MCF 10A (cell line): ENCODE measurements at regions of chr12 and their contacts with region 1.

Region 1: DNA sequence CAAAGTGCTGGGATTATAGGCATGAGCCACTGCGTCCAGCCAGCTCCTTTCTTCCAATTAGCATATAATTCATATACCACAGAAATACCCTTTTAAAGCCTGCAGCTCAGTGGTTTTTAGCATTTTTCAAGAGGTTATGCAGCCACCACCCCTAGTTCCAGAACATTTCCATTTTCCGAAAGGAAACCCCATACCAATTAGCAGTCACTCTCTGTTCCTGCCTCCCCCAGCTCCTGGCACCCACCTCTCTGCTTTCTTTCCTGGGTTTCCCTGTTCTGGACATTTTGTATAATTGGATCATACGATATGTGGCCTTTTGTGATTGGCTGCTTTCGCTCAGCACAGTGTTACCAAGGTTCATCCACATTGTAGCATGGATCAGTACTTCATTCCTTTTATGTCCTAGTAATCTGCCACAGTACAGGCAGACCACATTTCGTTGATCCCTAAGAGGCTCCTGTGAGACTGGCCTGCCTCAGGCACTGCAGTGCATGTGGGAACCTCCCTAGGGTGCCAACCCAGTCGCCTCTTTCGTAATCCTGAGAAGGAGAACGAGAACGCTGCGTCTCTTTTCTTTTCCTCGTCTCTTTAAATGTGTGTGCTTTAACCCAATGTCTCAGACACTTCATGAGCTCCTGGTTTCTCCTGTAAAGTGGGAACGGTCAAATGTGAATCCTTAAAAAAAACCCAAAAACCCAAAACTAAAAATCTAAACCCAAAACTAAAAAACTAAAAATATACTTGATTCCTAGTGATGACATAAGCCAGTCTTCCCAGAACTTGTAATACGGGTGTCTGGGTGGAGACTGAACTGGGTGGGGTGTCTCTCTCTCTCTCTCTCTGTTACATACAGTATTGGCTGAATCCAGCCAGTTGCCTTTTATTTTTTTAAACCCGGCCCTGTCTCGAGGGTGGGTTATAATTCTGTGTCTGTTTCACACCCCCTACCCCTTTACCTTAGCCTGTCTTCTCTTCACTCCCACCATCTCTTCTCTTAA is 14.7 kb downstream of the AACS start:
- DNase-seq: peak; percentile 97
- H3K4me3 Mint-ChIP-seq: peak overlapping the region; percentile 56
- H3K27ac Mint-ChIP-seq: peak overlapping the region; percentile 91
- H3K4me1 Mint-ChIP-seq: peaks cover 12% of the 10 kb centered on the region
- H3K27me3 Mint-ChIP-seq: no peaks in the 10 kb centered on the region
- CTCF ChIP-seq: no peak

Region 2: DNA sequence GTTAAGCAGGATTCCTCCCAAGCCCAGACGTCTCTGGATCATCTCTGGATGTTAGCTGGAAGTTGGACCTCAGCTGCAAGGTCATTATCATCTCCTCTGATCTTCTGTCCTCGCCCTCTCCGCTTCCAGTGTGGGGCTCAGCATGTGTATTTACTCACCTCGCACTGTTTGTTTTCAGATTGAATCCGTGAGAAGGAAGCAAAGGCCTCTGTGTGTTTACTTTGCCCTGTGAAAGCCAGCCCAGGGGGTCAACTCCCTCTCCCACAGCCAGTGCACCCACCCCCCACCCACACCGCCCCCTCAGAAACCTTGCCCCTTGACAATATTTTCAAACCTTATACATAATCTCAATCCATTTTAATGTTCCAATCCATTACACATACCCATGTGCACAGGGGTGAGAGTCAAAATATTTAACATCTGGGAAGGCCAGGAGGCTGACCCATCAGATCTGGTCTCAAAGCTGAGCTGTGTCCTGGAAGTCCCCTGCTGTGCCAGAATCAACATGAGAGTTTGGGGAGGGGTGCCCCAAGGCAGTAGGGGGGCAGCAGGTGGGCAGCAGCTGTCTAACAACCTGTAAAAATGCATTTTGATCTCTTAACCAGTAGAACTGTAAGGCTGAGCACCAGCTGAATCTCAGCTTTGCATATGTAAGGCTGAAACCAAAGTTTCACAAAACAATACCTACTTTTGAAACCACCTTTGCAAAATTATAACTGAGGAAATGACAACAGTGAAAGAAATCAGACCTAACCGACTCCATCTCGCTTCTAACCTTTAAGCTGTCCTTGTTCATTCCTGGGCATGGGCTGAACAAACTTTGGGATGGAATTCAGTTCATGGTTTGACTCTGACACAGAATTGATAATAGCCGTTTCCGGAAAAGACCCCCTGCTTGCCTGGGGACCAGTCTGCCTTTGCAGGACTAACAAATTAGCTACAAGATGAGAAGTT is 949.0 kb before region 1 on chr12:
- CTCF ChIA-PET with region 1: no interaction called
- POLR2A ChIA-PET with region 1: no interaction called
- intact Hi-C with region 1: no loop called
- DNase-seq: no peak
- H3K4me3 Mint-ChIP-seq: no peak overlapping the region
- H3K27ac Mint-ChIP-seq: no peak overlapping the region
- H3K4me1 Mint-ChIP-seq: peaks cover under 1% of the 10 kb centered on the region
- H3K27me3 Mint-ChIP-seq: no peaks in the 10 kb centered on the region
- CTCF ChIP-seq: no peak

Region 3: DNA sequence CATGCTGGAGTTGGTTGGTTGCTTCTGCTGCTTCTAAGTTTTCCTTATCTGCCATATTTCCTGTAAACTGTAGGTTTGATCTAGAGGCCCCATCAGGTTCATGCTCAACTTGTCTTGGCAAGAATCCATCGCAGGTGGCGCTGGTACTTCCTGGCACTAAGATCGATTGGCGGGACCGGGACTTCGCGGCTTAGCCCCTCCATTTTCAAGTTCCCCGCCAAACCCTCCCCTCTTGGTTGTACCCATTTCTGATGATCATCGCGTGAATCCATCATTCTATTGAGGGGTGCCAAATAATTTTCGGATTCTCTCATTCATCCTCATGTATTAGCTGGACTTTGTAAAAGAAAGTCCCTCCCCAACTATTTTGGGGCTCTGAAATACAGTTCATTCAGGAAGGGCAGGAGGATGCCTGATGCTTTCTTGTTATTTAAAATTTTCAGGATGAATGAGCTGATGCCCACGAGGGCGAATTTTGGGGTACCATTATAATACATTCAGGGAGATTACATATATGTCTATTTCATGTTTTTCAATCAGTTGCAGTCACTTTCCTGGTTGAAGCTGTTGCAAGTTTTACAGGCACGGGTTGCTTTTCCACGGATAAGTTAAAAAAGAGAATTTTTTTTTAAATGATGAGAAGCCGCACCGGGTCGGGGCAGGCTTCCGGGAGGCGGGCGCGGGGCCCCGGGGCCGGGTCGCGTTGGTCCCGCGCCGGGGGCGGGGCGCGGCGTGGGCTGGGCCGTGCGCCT is 86.9 kb before region 1 on chr12:
- CTCF ChIA-PET with region 1: interaction called, 4 read pairs
- POLR2A ChIA-PET with region 1: interaction called, 25 read pairs
- intact Hi-C with region 1: loop called (anchors 5 kb)
- DNase-seq: peak; percentile 80
- H3K4me3 Mint-ChIP-seq: peak overlapping the region; percentile 93
- H3K27ac Mint-ChIP-seq: peak overlapping the region; percentile 25
- H3K4me1 Mint-ChIP-seq: peaks cover 15% of the 10 kb centered on the region
- H3K27me3 Mint-ChIP-seq: no peaks in the 10 kb centered on the region
- CTCF ChIP-seq: peak; percentile 54

Region 4: DNA sequence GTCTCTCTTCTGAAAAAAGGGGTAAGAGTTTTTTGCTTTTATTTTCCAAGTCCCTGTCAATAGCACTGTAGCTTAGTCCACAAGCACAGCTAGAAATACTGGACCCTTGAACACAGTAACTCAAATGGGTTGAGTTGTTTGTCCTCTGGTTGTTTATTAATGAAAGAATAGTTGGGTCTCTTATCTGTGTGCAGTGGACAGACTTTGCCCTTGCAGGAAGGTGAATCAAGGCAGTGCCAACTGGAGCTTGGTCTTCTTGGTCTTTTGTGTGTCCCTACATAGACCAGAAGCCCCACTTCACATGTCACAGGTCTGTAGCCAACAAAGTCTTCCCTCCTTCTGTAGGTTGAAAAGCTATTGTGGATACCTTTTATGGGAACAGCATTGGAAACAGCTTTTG is 307.3 kb after region 1 on chr12:
- CTCF ChIA-PET with region 1: no interaction called
- POLR2A ChIA-PET with region 1: no interaction called
- intact Hi-C with region 1: no loop called
- DNase-seq: no peak
- H3K4me3 Mint-ChIP-seq: no peak overlapping the region
- H3K27ac Mint-ChIP-seq: no peak overlapping the region
- H3K4me1 Mint-ChIP-seq: no peaks in the 10 kb centered on the region
- H3K27me3 Mint-ChIP-seq: peaks cover 11% of the 10 kb centered on the region
- CTCF ChIP-seq: no peak

Region 5: DNA sequence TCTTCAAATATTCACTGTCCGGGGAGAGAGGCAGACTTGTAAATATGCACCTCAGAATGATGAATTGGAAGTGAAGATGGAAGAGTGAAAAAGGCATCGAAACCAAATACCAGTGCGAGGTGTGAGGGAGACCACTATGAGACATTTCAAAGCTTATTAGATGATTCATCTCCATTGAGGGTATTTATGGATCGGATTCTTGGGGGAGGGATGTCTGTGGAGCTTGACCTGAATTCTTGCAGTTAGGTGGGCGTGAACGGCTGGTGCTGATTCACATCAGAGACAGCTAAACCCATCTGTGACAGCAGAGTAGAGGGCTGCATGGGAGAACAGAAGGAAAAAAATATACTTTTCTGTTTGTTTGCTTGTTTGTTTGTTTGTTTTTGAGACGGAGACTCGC is 662.5 kb after region 1 on chr12:
- CTCF ChIA-PET with region 1: no interaction called
- POLR2A ChIA-PET with region 1: no interaction called
- intact Hi-C with region 1: no loop called
- DNase-seq: no peak
- H3K4me3 Mint-ChIP-seq: no peak overlapping the region
- H3K27ac Mint-ChIP-seq: no peak overlapping the region
- H3K4me1 Mint-ChIP-seq: no peaks in the 10 kb centered on the region
- H3K27me3 Mint-ChIP-seq: no peaks in the 10 kb centered on the region
- CTCF ChIP-seq: no peak